Transverse colon (tissue), 4 donors: ENCODE measurements at regions of chr11 and their contacts with region 1.

Region 1: GRCh38 chr11:61129639-61130523 is 27.6 kb downstream of the CD5 start:
- DNase-seq: peak; percentile 92
- H3K4me3 ChIP-seq: peak overlapping the region in 2 of 4 donors; percentile 3 to 13
- H3K27ac ChIP-seq: peak overlapping the region; percentile 61 to 77 (median 67)
- H3K4me1 ChIP-seq: peaks cover 3 to 14% (median 6%) of the 10 kb centered on the region in 4 donors
- H3K27me3 ChIP-seq: no peaks in the 10 kb centered on the region
- CTCF ChIP-seq: peak; percentile 98 to 100 (median 99)
- EP300 ChIP-seq: no peak
- POLR2A ChIP-seq: no peak

Region 2: GRCh38 chr11:60831143-60831500 is 298.8 kb before region 1 on chr11:
- in situ Hi-C with region 1: loop called in 1 of 4 experiments (anchors 25 kb)
- intact Hi-C with region 1: loop called (anchors 5 kb)
- DNase-seq: peak; percentile 86
- H3K4me3 ChIP-seq: no peak overlapping the region
- H3K27ac ChIP-seq: no peak overlapping the region
- H3K4me1 ChIP-seq: peaks cover 0 to 11% (median 6%) of the 10 kb centered on the region in 4 donors
- H3K27me3 ChIP-seq: peaks cover 3% of the 10 kb centered on the region
- CTCF ChIP-seq: peak; percentile 89 to 97 (median 92)
- EP300 ChIP-seq: no peak
- POLR2A ChIP-seq: no peak

Region 3: DNA sequence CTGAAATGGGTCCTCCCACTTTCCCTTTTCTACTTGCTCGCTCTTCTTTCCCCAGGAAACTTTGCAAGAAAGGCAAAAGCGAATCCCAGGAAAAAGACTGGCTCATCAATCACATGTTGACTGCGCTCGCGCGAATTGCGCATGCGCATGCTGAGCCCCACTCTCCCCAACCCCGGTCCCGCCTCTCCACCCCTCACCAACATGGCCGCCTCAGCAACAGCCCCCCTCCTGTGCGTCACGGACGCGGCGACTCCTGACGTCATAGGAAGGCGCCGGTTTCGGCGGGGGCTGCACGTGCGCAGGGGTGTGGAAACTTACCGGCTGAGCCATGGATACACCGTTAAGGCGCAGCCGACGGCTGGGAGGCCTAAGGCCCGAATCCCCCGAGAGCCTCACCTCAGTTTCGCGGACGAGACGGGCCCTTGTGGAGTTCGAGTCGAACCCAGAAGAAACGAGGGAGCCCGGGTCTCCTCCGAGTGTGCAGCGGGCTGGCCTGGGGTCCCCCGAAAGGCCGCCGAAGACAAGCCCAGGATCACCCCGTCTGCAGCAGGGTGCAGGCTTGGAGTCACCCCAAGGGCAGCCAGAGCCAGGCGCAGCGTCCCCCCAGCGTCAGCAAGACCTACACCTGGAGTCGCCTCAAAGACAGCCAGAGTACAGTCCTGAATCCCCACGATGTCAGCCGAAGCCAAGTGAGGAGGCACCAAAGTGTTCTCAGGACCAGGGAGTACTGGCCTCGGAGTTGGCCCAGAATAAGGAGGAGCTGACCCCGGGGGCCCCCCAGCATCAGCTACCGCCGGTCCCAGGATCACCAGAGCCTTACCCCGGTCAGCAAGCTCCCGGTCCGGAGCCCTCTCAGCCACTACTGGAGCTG is 287.8 kb before region 1 on chr11 and contains the start of gene CCDC86:
- in situ Hi-C with region 1: loop called in 1 of 4 experiments (anchors 25 kb)
- intact Hi-C with region 1: no loop called
- DNase-seq: peak; percentile 97
- H3K4me3 ChIP-seq: peak within 1 kb of the TSS; percentile 59 to 96 (median 63)
- H3K27ac ChIP-seq: peak within 1 kb of the TSS; percentile 69 to 85 (median 80)
- H3K4me1 ChIP-seq: peaks cover 19 to 39% (median 32%) of the 10 kb centered on the region in 4 donors
- H3K27me3 ChIP-seq: no peaks in the 10 kb centered on the region
- CTCF ChIP-seq: no peak
- EP300 ChIP-seq: peak; percentile 36
- POLR2A ChIP-seq: peak; percentile 54
- total RNA-seq, gene CCDC86: 1.9 to 9.1 (median 5.5) TPM

Region 4: GRCh38 chr11:60932605-60933356 is 197.1 kb before region 1 on chr11:
- in situ Hi-C with region 1: no loop called
- intact Hi-C with region 1: no loop called
- DNase-seq: no peak
- H3K4me3 ChIP-seq: no peak overlapping the region
- H3K27ac ChIP-seq: no peak overlapping the region
- H3K4me1 ChIP-seq: no peaks in the 10 kb centered on the region
- H3K27me3 ChIP-seq: no peaks in the 10 kb centered on the region
- CTCF ChIP-seq: no peak
- EP300 ChIP-seq: no peak
- POLR2A ChIP-seq: no peak

Region 5: GRCh38 chr11:60964801-60965200 is 165.1 kb before region 1 on chr11:
- in situ Hi-C with region 1: loop called in 1 of 4 experiments (anchors 10 kb)
- intact Hi-C with region 1: no loop called
- DNase-seq: no peak
- H3K4me3 ChIP-seq: no peak overlapping the region
- H3K27ac ChIP-seq: no peak overlapping the region
- H3K4me1 ChIP-seq: no peaks in the 10 kb centered on the region
- H3K27me3 ChIP-seq: no peaks in the 10 kb centered on the region
- CTCF ChIP-seq: no peak
- EP300 ChIP-seq: no peak
- POLR2A ChIP-seq: no peak

Region 6: DNA sequence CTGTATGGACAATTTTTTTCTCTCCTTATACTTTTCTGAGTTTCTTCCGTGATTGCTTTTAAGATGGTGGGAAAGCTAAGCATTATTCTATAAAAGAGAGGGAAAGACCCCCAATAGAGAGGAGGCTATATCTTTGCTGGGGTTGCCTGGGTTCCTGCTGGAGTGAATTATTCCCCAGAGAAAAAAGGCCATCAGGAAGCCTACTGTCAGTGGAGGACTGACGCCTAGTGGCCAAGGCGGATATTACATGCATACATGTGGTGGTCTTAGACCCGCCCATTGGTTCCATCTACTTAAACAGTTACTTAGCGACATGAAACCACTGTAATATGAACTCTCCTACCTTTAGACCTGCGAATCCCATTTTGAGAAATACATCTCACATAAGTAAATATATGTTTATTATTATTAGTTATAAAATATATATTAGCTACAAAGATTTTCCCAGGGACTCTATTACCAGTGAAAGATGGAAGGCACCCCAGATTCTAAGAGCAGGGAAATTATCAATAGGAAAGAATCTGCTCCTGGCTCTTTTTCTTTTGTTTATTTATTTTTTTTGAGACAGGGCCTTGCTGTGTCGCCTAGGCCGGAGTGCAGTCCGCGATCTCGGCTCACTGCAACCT is 57.7 kb after region 1 on chr11:
- in situ Hi-C with region 1: no loop called
- intact Hi-C with region 1: loop called (anchors 5 kb)
- DNase-seq: peak; percentile 77
- H3K4me3 ChIP-seq: no peak overlapping the region
- H3K27ac ChIP-seq: no peak overlapping the region
- H3K4me1 ChIP-seq: no peaks in the 10 kb centered on the region
- H3K27me3 ChIP-seq: peaks cover 3% of the 10 kb centered on the region
- CTCF ChIP-seq: peak; percentile 91 to 96 (median 92)
- EP300 ChIP-seq: no peak
- POLR2A ChIP-seq: no peak